Activated CD4-positive, alpha-beta T cell treated with anti-CD3 and anti-CD28 coated beads for 36 hours (primary cell): ENCODE measurements at regions of chr15 and their contacts with region 1.

Region 1: GRCh38 chr15:88258093-88258641 is 1.6 kb upstream of the NTRK3 start:
- DNase-seq: peak; percentile 59
- ATAC-seq: no peak
- H3K4me3 Mint-ChIP-seq: peak overlapping the region; percentile 64
- H3K27ac Mint-ChIP-seq: no peak overlapping the region
- H3K4me1 Mint-ChIP-seq: peaks cover 23% of the 10 kb centered on the region
- H3K27me3 Mint-ChIP-seq: peaks cover 50% of the 10 kb centered on the region

Region 2: DNA sequence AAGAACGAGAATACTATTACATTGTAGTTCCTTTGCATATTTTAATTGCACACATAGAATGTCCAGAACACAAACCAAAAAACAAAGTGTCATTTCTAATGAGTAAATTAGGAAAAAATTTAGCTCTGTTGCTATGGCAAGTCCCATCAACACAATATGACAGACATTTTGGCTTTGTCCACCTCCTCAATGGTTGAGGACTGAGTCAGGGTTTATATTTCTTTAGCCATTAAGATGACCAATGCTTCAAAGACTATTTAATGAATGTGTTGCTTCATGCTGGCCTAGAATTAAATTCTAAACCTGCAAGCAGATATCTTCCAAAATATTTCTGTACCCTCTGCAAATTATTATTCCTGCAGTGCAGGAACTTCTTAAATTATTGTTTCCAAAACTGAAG is 720.9 kb before region 1 on chr15:
- CTCF ChIA-PET with region 1: no interaction called
- POLR2A ChIA-PET with region 1: no interaction called
- intact Hi-C with region 1: no loop called
- DNase-seq: no peak
- ATAC-seq: no peak
- H3K4me3 Mint-ChIP-seq: no peak overlapping the region
- H3K27ac Mint-ChIP-seq: no peak overlapping the region
- H3K4me1 Mint-ChIP-seq: no peaks in the 10 kb centered on the region
- H3K27me3 Mint-ChIP-seq: no peaks in the 10 kb centered on the region

Region 3: GRCh38 chr15:88331280-88331679 is 73.1 kb after region 1 on chr15:
- CTCF ChIA-PET with region 1: no interaction called
- POLR2A ChIA-PET with region 1: no interaction called
- intact Hi-C with region 1: loop called in 1 of 2 experiments (anchors 5 kb)
- DNase-seq: peak; percentile 82
- ATAC-seq: peak; percentile 72
- H3K4me3 Mint-ChIP-seq: no peak overlapping the region
- H3K27ac Mint-ChIP-seq: no peak overlapping the region
- H3K4me1 Mint-ChIP-seq: no peaks in the 10 kb centered on the region
- H3K27me3 Mint-ChIP-seq: peaks cover 6% of the 10 kb centered on the region